ENCODE measurements at regions of chr20 and their contacts with region 1.

Region 1: DNA sequence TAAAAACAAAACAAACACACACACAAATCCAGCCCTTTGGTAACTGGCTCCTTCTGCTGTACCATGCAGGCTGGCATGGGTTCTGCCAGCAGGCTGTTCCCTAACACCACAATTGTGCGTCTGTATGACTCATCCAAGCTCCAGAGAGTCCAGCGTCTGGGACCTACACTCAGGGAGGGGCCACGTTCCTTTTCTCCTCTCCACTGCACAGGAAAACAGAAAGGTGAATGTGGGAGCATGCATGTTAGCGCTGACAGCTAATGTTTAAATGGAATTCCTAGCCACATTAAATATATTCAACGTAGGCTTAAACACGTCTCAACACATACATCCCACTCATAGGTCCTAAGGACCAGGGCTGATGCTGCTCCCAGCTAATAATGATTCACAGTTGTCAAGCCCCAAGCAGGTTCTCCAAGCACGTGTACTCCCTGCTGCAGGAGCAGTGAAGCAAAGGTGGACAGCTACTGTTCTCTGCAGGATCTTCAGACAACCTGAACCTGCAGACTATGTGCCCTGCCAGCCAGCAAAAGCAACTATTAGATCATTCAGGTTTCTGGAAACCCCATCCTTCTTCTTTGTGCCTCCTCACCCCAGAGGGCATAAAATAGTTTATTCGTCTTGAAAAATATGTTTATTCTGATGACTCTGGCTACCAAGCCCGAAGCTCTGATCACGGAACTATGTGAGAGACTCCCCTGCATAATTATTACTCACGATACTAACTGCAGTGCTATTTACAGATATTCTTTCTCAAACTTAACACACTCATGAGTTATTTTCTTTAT is 20.9 kb downstream of the MAP1LC3A start:
- DNase-seq: peak; percentile 75
- ATAC-seq: peak; percentile 83

Region 2: DNA sequence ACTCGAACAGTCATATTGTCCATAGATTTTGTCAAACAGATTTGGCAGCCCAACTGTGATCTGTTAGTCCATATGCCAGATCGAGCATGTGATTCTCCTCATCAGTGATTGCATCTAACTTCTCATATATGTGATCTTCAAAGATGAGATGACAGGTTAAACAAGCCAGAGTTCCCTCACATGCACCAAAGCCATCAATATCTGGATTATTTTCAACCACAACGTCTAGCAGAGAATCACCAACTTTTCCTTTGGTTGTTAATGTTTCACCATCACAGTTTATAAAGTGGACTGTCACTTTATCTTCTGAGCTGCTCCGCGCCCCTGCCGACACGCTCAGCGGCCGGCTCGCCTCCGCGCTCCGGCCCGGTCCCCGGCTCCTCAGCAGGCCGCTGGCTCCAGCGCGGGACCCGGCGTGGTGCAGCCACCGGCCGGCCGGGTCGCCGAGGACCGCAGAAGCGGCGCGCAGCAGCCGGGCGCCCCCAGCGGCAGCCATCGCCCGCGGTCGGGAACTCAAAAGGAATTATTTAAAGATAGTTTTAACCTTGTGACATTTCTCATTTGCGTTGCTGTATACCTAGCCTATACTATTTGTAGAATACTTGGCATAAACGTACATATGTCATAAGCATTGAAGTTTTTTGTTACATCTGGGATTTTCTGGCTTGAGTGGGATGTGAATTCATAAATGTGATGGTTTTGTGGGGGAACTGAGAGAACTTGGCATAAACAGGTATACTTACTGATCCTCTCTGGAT is 103.2 kb before region 1 on chr20:
- intact Hi-C with region 1: no loop called
- DNase-seq: peak; percentile 75
- ATAC-seq: peak; percentile 93

Region 3: DNA sequence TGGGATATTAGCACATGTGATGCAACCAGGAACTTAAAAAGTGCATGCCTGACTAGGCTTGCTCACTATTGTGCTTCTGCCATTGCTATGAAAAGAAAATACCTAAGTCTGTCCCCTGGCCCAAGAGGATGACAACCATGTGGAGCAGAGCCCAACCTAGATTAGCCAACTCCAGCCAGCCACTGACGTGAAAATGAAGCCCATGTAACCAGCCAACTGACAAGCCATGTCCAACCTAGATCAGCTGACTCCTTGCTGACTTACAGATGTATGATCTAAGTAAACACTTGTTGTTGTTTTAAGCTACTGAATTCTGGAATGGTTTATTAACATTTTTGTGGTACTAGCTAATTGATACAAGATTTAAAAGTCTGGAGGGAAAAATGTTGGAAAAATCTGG is 50.0 kb after region 1 on chr20:
- intact Hi-C with region 1: loop called (anchors 2 kb)
- DNase-seq: no peak
- ATAC-seq: peak; percentile 82

Region 4: DNA sequence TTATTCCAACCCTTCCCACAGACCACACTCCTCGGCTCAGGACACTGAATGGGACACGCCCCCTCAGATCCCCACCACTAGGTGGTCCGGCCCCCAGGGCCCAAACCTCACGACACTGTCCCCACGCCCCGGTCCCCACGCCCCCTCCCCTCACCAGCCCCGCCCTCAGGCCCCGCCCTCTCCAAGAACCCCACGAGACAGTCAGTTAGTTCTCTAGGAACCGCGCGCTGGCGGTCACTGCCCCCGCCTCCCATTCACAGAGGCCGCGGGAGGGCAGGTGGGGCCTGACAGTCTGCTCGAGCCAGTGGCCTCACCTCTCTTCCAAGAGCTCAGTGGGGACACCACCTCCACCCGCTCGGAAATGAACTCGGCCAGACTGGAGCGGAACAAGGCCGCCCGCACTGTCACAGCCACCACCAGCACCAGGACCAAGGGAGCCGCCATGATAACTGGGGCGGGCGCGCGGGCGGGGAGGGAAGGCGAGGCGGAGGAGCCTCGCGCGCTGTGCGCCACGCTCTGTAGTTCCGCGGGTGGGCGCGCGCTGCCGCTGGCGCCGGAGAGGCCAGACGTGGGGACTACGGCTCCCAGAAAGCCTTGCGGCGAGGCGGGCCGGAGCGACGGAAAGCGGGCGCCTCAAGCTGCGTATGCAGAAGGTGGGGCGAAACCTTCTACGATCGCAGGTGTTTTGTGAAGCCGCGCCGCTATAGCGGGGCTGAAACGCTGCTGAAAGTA is 97.4 kb after region 1 on chr20 and contains the start of gene PIGU:
- intact Hi-C with region 1: no loop called
- DNase-seq: peak; percentile 99
- ATAC-seq: peak; percentile 100
- total RNA-seq, gene PIGU: 12.9 TPM

Region 5: DNA sequence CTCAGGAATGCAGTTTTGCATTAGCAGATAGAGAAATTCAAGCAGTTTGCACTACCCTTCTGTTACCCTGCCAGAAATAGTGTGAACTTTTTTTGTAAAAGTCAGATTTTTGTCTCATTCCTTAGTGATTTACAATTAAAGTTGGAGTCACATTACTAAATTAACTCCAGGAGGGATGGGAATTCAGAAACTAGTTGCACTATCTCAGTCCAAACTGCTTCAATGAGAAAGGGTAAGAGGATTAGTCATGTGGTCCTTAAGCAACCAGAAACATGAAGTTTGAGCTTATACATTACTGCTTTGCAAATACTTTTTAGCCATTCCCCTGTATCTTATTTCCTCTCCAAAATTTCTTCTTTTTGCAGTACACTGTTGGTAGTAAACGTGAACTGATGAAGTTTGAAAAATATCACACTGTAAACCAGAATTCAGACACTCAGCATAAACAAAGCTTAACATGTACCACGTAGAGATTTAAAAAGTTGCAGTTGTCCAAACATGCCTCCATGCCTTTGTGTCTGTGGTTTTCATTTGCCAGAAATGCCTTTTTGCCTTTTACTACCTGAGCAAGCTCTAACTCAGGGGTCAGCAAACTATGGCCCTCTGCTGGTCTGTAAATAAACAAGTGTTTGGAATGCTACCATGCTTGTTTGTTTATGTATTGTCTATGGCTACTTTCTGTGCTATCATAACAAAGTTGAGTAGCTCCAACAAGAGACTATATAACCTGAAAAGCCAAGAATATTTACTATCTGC is 174.5 kb after region 1 on chr20:
- intact Hi-C with region 1: loop called (anchors 5 kb)
- DNase-seq: no peak
- ATAC-seq: no peak

Region 6: DNA sequence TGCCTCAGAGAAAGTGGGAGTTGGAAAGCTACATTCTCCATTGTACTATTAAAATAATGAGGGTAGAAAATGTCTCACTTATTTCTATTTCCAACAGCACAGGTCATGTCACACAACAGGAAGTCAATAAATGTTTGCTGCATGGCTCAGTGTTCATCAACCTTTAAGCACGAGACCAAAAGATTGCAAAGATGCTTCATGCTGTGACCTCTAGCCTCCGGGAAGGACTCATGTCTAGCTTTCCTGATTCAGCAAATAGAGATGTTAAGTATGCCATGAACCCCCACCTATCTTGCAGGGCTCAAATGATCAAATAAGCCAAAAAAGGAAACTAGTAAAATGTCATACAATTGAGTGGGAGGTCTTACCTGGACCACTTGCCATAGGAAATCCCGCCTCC is 188.7 kb after region 1 on chr20:
- intact Hi-C with region 1: loop called (anchors 1 kb)
- DNase-seq: no peak
- ATAC-seq: no peak

Measured in Right ventricle myocardium inferior (tissue), 1 donor.